GM12878 (cell line): ENCODE measurements at regions of chr19 and their contacts with region 1.

Region 1: GRCh38 chr19:45779231-45780145 is 2.8 kb downstream of the DMPK start:
- DNase-seq: peak; percentile 63
- ATAC-seq: peak; percentile 99
- H3K4me3 ChIP-seq: peak overlapping the region; percentile 60; the same call in 1 of the 2 replicates
- H3K27ac ChIP-seq: no peak overlapping the region
- H3K4me1 ChIP-seq: peaks cover 11% of the 10 kb centered on the region
- H3K27me3 ChIP-seq: no peaks in the 10 kb centered on the region
- CTCF ChIP-seq: peak; percentile 74 to 88 (median 77)
- EP300 ChIP-seq: no peak
- POLR2A ChIP-seq: peak; percentile 67
- RAD21 ChIP-seq: 0 out of 2 replicates have a peak, but pooled peaks have one; percentile 27

Region 2: DNA sequence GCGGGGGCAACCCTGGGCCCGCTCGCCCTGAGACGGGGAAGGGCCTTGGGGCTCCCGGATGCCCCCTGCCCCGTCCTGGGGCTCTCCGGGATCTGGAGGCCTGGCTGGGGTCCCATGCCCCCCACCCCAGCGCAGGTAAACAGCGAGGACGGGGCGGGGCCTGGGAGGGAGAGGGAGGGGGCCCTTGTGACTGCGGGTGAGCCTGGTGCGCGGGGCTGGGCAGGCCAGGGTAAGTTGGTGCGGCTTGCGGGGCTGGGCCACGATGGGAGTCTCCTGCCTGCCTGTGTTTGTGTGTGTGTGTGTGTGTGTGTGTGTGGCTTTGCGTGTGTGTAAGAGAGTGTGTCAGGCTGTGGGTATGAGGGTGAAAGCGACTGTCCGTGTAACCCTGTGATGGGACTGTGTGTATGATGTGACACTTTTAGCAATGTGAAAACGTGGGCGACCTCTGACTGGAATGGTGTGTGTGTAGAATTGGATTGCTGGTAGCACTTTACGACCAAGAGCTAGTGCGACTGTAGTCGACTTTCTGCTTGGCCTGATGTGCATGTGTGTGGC is 438.5 kb before region 1 on chr19:
- CTCF ChIA-PET with region 1: no interaction called
- POLR2A ChIA-PET with region 1: no interaction called
- RAD21 ChIA-PET with region 1: no interaction called
- SMC1A ChIA-PET with region 1: no interaction called
- in situ Hi-C with region 1: no loop called
- intact Hi-C with region 1: no loop called
- DNase-seq: no peak
- ATAC-seq: no peak
- H3K4me3 ChIP-seq: peak overlapping the region; percentile 1; the same call in 1 of the 2 replicates
- H3K27ac ChIP-seq: no peak overlapping the region
- H3K4me1 ChIP-seq: peaks cover 3% of the 10 kb centered on the region; the same call in 1 of the 2 replicates
- H3K27me3 ChIP-seq: 0 out of 4 replicates have a peak, but pooled peaks cover 0 to 1% of the 10 kb centered on the region in 2 experiments
- CTCF ChIP-seq: no peak
- EP300 ChIP-seq: no peak
- POLR2A ChIP-seq: no peak
- RAD21 ChIP-seq: no peak

Region 3: DNA sequence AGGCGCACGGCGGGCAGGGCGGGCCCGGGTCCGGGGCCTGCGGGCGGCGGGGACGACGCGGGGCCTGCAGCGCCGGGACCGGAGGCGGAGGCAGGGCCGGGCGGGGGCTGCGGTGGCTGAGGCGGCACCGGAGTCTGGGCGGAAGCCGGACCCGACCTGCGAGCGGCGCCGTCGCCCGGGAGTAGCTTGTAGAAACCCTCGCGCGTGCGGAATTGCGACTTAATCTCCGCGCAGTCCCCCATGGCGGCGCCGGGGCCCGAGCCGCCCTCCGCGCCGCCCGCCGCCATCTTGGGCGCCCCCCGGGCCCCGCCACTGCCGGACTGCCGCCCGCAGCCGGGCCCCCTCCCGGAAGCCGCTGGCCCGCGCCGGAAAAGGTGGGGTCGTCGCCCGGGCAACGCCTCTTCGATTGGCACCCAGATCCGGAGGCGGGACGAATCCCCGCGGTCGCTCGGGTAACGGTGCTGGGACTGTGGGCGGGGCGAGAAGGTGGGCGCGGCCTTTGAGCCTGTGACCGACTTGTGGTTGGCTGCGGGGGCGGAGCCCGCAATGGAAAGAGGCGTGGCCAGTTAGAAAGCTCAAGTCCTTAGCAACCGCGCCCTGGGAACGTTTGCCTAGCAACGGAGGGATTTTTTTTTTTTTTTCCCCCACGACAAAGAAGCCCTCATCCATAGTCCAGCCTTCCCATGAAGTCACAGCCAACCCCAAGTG is 13.1 kb after region 1 on chr19 and contains the start of gene DMWD:
- CTCF ChIA-PET with region 1: interaction called, 14 read pairs
- POLR2A ChIA-PET with region 1: no interaction called
- RAD21 ChIA-PET with region 1: interaction called, 4 read pairs
- SMC1A ChIA-PET with region 1: no interaction called
- in situ Hi-C with region 1: no loop called
- intact Hi-C with region 1: no loop called
- DNase-seq: peak; percentile 81
- ATAC-seq: peak; percentile 95
- H3K4me3 ChIP-seq: peak within 1 kb of the TSS; percentile 98
- H3K27ac ChIP-seq: peak within 1 kb of the TSS; percentile 72
- H3K4me1 ChIP-seq: peaks cover 14% of the 10 kb centered on the region
- H3K27me3 ChIP-seq: no peaks in the 10 kb centered on the region
- CTCF ChIP-seq: no peak
- EP300 ChIP-seq: no peak
- POLR2A ChIP-seq: peak; percentile 80
- RAD21 ChIP-seq: no peak
- polyA plus RNA-seq, gene DMWD: 3.5 to 3.8 TPM

Region 4: DNA sequence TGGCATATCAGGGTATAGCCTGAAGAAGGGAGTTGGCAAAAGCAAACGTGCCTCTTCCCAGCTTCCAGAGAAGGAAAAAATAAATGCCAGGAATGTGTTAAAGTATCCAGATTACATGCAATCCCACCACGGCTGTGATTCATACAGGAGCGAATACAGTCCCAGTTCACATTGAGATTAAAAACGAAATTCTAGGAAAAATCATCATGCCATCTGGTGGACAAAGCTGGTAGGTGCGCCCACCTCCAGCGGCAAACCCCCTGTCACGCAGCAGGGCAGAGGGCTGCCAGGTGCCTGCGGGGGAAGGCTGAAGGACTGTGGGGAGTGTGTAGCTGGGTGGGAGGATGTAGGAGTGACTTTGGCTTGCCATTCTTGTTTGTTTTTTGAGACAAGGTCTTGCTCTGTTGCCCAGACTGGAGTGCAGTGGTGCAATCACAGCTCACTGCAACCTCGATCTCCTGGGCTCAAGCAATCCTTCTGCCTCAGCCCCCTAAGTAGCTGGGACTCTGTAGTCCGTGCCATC is 19.6 kb after region 1 on chr19:
- CTCF ChIA-PET with region 1: interaction called, 14 read pairs
- POLR2A ChIA-PET with region 1: no interaction called
- RAD21 ChIA-PET with region 1: no interaction called
- SMC1A ChIA-PET with region 1: no interaction called
- in situ Hi-C with region 1: no loop called
- intact Hi-C with region 1: no loop called
- DNase-seq: peak; percentile 23
- ATAC-seq: peak; percentile 93
- H3K4me3 ChIP-seq: no peak overlapping the region
- H3K27ac ChIP-seq: no peak overlapping the region
- H3K4me1 ChIP-seq: peaks cover 8% of the 10 kb centered on the region
- H3K27me3 ChIP-seq: no peaks in the 10 kb centered on the region
- CTCF ChIP-seq: peak; percentile 75 to 91 (median 85)
- EP300 ChIP-seq: no peak
- POLR2A ChIP-seq: no peak
- RAD21 ChIP-seq: peak; percentile 39; the same call in 1 of the 2 replicates